K562 (cell line): ENCODE measurements at regions of chr16 and their contacts with region 1.

Region 1: DNA sequence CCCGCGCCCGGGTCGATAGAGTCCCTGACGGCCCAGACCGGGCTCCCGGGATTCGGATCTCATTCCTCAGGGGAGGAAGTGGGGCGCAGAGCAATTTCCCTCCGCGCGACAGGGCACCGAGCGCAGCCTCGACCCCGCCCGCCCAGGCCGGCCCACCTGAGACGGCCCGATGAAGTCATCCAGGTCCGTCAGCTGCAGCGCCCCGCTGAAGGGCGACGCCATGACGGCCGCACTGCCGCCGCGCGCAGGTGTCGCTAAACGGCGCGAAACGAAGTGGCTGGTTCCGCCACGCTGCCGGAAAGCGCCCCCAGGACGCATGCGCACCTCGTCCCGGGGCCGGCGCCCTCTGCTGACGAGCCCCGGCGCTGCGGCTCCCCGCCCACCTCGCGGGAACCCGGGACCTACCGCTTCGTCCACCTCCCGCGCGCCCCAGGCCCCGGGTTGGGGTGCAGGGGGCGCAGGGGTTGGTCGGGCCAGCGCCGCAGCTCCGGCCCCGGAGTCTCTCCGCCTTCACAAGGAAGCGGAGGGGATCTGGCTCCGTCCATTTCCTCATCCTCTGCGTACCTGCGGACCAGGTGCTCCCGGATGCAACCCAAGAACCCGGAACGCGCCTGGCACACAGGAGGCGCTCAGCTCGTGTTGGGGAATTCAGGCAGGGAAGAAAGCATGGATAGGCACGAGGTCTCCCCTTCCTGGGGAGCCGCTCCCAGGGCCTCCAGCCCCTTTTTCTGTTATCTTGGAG is at the start of gene CIAO3:
- DNase-seq: peak; percentile 94 to 95 (median 94)
- ATAC-seq: peak; percentile 93
- H3K4me3 ChIP-seq: peak within 1 kb of the TSS; percentile 96
- H3K27ac ChIP-seq: peak within 1 kb of the TSS; percentile 90
- H3K4me1 ChIP-seq: peaks cover 18 to 78% of the 10 kb centered on the region in 2 experiments
- H3K27me3 ChIP-seq: no peaks in the 10 kb centered on the region
- CTCF ChIP-seq: peak; percentile 86 to 87 (median 86)
- EP300 ChIP-seq: 0 out of 2 replicates have a peak, but pooled peaks have one; percentile 10
- POLR2A ChIP-seq: peak; percentile 77
- RAD21 ChIP-seq: peak in 1 of 2 experiments; percentile 28; a peak in 2 of 4 replicates
- polyA plus RNA-seq, gene CIAO3: 2.2 to 2.4 TPM

Region 2: DNA sequence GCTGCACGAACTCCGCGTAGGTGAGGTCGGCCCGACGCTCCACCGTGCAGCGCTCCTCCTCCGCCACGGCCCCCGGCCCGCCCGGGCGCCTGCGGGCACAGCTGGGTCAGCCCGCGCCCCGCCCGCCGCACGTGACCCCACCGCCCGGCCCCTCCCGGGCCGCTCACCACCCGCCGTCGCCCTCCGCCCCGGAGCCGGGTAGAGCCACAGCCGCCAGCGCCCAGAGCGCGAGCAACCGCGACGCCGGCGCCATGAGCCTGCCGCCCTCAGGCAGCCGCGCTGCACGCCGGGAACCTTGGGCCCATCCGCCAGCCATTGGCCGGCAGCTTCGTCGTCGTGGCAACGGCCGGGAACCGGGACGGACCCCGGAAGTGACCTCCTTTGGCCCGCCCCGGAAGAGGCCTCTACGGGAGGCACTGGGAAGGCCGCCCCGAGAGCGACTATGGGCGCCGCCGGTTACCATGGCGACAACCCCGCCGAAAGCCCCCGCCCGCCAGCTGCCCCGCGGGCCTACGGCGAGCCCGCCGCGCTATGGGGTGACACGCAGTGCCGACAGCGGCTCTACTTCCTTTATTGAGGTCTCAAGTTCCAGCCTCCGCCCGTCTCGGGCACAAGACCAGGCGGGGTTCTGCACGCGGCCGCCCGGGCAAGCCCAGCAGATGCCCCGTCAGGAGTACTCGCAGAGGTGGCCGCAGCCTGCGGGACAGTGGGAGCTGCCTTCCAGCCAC is 56.7 kb before region 1 on chr16 and contains the start of gene JMJD8:
- CTCF ChIA-PET with region 1: no interaction called
- POLR2A ChIA-PET with region 1: no interaction called
- in situ Hi-C with region 1: no loop called
- intact Hi-C with region 1: no loop called
- DNase-seq: peak; percentile 83 to 97 (median 90)
- ATAC-seq: peak; percentile 76
- H3K4me3 ChIP-seq: peak within 1 kb of the TSS; percentile 98
- H3K27ac ChIP-seq: peak within 1 kb of the TSS; percentile 88
- H3K4me1 ChIP-seq: peaks cover 27 to 96% of the 10 kb centered on the region in 2 experiments
- H3K27me3 ChIP-seq: no peaks in the 10 kb centered on the region
- CTCF ChIP-seq: 0 out of 6 replicates have a peak, but pooled peaks of 1 of the 3 experiments have one; percentile 1
- EP300 ChIP-seq: no peak; the same call in 1 of the 2 replicates
- POLR2A ChIP-seq: peak; percentile 59; the same call in 1 of the 2 replicates
- RAD21 ChIP-seq: no peak
- polyA plus RNA-seq, gene JMJD8: 1.2 to 2.3 TPM

Region 3: DNA sequence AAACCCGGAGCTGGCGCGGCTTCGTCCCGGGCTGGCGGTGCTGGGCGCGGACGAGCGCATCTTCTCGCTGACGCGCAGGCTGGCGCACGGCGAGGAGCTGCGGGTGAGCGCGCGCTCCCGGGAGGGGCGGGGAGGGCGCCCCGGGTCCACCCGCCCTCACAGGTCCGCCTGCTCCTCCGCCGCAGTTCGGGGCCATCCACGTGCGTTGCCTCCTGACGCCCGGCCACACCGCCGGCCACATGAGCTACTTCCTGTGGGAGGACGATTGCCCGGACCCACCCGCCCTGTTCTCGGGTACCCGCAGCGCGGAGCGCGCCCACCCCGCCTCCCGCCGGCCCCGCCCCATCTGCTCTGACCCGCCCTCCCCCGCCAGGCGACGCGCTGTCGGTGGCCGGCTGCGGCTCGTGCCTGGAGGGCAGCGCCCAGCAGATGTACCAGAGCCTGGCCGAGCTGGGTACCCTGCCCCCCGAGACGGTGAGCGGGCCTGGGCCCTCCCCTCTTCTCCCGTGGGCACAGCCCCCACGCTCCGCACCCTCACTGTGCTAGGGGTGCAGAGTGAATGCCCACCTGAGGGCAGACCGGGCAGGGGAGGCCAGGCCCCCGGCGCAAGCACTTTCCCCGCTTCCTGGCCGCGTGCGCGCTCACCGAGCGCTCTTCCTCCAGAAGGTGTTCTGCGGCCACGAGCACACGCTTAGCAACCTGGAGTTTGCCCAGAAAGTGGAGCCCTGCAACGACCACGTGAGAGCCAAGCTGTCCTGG is 12.6 kb before region 1 on chr16:
- CTCF ChIA-PET with region 1: no interaction called
- POLR2A ChIA-PET with region 1: interaction called, 25 read pairs
- in situ Hi-C with region 1: no loop called
- intact Hi-C with region 1: no loop called
- DNase-seq: peak; percentile 82 to 95 (median 86)
- ATAC-seq: peak; percentile 73
- H3K4me3 ChIP-seq: peak overlapping the region; percentile 80
- H3K27ac ChIP-seq: peak overlapping the region; percentile 98
- H3K4me1 ChIP-seq: peaks cover 10 to 93% of the 10 kb centered on the region in 2 experiments; a peak in 4 of 5 replicates
- H3K27me3 ChIP-seq: no peaks in the 10 kb centered on the region
- CTCF ChIP-seq: no peak
- EP300 ChIP-seq: no peak
- POLR2A ChIP-seq: peak; percentile 69
- RAD21 ChIP-seq: no peak

Region 4: GRCh38 chr16:788394-789126 is 47.6 kb after region 1 on chr16 and contains the start of gene CHTF18:
- CTCF ChIA-PET with region 1: no interaction called
- POLR2A ChIA-PET with region 1: interaction called, 3 read pairs
- in situ Hi-C with region 1: loop called (anchors 5 kb)
- intact Hi-C with region 1: loop called (anchors 1 kb)
- DNase-seq: peak; percentile 95 to 100 (median 98)
- ATAC-seq: peak; percentile 86
- H3K4me3 ChIP-seq: peak within 1 kb of the TSS; percentile 96
- H3K27ac ChIP-seq: peak within 1 kb of the TSS; percentile 83
- H3K4me1 ChIP-seq: peaks cover 13 to 94% of the 10 kb centered on the region in 2 experiments; a peak in 4 of 5 replicates
- H3K27me3 ChIP-seq: no peaks in the 10 kb centered on the region
- CTCF ChIP-seq: no peak
- EP300 ChIP-seq: no peak
- POLR2A ChIP-seq: peak; percentile 67; the same call in 1 of the 2 replicates
- RAD21 ChIP-seq: no peak
- polyA plus RNA-seq, gene CHTF18: 2.5 to 2.7 TPM